ENCODE measurements at regions of chr2 and their contacts with region 1.

Region 1: DNA sequence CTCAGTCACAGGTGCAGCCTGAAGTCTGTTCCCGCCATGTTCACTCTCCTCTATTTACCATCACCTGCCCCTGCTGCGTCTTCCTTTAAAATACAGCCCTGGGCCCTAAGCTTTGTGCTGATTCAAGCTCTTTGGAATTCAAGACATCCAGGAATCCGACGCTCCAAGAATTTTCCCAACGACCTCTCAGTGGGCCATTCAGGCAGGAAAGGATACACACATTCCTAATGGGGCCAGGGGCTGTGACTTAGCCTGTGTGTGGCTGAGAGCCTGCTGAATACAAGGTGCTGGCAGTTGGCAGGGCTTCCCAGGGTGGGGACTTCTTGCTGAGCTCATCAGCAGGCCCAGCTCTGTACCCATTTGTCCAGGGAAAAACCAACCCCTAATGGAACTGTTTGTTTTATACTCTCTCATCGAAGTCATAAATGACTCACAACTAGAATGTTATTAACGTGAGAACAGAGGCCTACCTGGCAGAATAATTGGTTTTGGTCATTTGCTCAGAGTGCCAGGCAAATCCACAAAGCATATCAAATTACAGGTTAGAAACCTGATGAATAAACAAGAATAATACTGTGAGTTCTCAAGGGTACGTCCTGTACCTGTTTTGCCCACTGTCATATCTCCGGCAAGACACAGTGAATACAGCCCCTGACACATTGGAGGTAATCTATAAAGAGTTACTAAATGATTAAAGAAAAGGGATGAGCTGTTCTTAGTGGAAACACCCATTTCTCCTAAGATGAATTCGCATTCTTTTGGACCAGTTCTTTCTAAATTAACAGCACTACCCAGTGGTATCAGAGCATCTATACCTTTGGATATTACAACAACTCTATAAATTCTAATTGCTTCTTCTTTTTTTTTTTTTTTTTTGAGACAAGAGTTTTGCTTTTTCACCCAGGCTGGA is 12.6 kb upstream of the KCMF1 start:
- DNase-seq: peak; percentile 99
- H3K4me3 ChIP-seq: no peak overlapping the region
- H3K27ac ChIP-seq: peak overlapping the region; percentile 97
- H3K4me1 ChIP-seq: peaks cover 40% of the 10 kb centered on the region
- H3K27me3 ChIP-seq: no peaks in the 10 kb centered on the region
- CTCF ChIP-seq: no peak

Region 2: GRCh38 chr2:84905181-84906107 is 52.9 kb before region 1 on chr2 and contains the start of gene TMSB10:
- CTCF ChIA-PET with region 1: no interaction called
- dilution Hi-C with region 1: loop called (anchors 5 kb)
- in situ Hi-C with region 1: no loop called
- intact Hi-C with region 1: no loop called
- DNase-seq: peak; percentile 85
- H3K4me3 ChIP-seq: peak within 1 kb of the TSS; percentile 82 to 94 (median 94)
- H3K27ac ChIP-seq: peak within 1 kb of the TSS; percentile 81
- H3K4me1 ChIP-seq: peaks cover 3% of the 10 kb centered on the region
- H3K27me3 ChIP-seq: no peaks in the 10 kb centered on the region
- CTCF ChIP-seq: peak in 1 of 2 donors; percentile 16
- total RNA-seq, gene TMSB10: 3,165 to 4,185 TPM

Region 3: GRCh38 chr2:84946204-84947009 is 12.0 kb before region 1 on chr2:
- CTCF ChIA-PET with region 1: no interaction called
- dilution Hi-C with region 1: no loop called
- in situ Hi-C with region 1: no loop called
- intact Hi-C with region 1: loop called (anchors 1 kb)
- DNase-seq: peak; percentile 99
- H3K4me3 ChIP-seq: peak overlapping the region in 1 of 3 experiments; percentile 19
- H3K27ac ChIP-seq: peak overlapping the region; percentile 98
- H3K4me1 ChIP-seq: peaks cover 33% of the 10 kb centered on the region
- H3K27me3 ChIP-seq: no peaks in the 10 kb centered on the region
- CTCF ChIP-seq: no peak

Region 4: GRCh38 chr2:85001595-85001994 is 43.2 kb after region 1 on chr2:
- CTCF ChIA-PET with region 1: no interaction called
- dilution Hi-C with region 1: loop called (anchors 5 kb)
- in situ Hi-C with region 1: no loop called
- intact Hi-C with region 1: no loop called
- DNase-seq: peak; percentile 61
- H3K4me3 ChIP-seq: no peak overlapping the region
- H3K27ac ChIP-seq: peak overlapping the region; percentile 50
- H3K4me1 ChIP-seq: peaks cover 14% of the 10 kb centered on the region
- H3K27me3 ChIP-seq: no peaks in the 10 kb centered on the region
- CTCF ChIP-seq: no peak